GM10248 (cell line): ENCODE measurements at regions of chr10 and their contacts with region 1.

Region 1: GRCh38 chr10:47047671-47048525 is 136.7 kb downstream of the PTPN20 start:
- DNase-seq: peak; percentile 78
- CTCF ChIP-seq: peak; percentile 84

Region 2: GRCh38 chr10:46525177-46525823 is 522.6 kb before region 1 on chr10:
- CTCF ChIA-PET with region 1: no interaction called
- POLR2A ChIA-PET with region 1: no interaction called
- DNase-seq: no peak
- CTCF ChIP-seq: no peak

Region 3: GRCh38 chr10:47031211-47031900 is 16.5 kb before region 1 on chr10:
- CTCF ChIA-PET with region 1: interaction called, 23 read pairs
- POLR2A ChIA-PET with region 1: no interaction called
- DNase-seq: no peak
- CTCF ChIP-seq: no peak

Region 4: GRCh38 chr10:47087667-47088066 is 39.8 kb after region 1 on chr10:
- CTCF ChIA-PET with region 1: interaction called, 10 read pairs
- POLR2A ChIA-PET with region 1: no interaction called
- DNase-seq: no peak
- CTCF ChIP-seq: no peak

Region 5: GRCh38 chr10:47101807-47102206 is 53.9 kb after region 1 on chr10:
- CTCF ChIA-PET with region 1: no interaction called
- POLR2A ChIA-PET with region 1: no interaction called
- DNase-seq: no peak
- CTCF ChIP-seq: no peak

Region 6: DNA sequence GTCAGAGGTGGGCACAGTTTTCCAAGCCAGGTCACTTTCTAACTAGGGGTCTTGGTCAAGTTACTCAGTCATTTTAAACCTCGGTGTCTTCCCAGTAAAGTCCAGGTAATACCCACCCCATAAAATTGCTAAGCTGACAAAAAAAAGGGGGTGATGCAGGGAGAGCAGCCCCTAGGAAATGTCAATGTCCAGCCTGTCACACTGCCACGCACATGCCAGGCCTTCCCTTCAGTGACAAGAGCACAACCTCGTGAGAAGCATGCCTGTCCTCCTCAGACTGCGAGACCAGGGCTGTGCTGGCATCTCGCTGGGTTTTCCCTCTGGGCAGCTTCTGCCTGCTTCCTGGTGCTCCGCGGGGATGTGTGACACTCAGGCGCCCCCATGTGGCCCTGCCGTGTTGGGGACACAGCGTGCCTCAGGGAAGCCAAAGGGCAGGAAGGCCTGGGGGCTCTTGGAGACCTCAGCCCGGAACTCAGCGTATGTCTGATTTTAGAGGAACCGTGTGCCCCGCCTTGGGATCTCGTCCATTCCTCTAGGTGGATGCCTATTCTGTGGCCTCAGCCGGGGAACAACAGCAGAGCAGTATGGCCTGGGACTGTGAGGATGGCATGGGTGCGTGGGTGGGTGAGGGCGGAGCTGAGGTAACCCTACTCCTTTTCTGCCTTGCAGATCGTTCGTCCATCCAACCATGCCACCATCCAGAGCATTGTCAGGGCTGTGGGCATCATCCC is 264.2 kb after region 1 on chr10:
- CTCF ChIA-PET with region 1: interaction called, 125 read pairs
- POLR2A ChIA-PET with region 1: no interaction called
- DNase-seq: peak; percentile 85
- CTCF ChIP-seq: peak; percentile 90